ENCODE measurements at regions of chr11 and their contacts with region 1.

Region 1: GRCh38 chr11:10405855-10406592 is 49.0 kb upstream of the AMPD3 start:
- H3K4me3 ChIP-seq: no peak overlapping the region
- H3K27ac ChIP-seq: no peak overlapping the region
- H3K4me1 ChIP-seq: no peaks in the 10 kb centered on the region
- CTCF ChIP-seq: peak; percentile 45; the same call in 1 of the 2 replicates

Region 2: DNA sequence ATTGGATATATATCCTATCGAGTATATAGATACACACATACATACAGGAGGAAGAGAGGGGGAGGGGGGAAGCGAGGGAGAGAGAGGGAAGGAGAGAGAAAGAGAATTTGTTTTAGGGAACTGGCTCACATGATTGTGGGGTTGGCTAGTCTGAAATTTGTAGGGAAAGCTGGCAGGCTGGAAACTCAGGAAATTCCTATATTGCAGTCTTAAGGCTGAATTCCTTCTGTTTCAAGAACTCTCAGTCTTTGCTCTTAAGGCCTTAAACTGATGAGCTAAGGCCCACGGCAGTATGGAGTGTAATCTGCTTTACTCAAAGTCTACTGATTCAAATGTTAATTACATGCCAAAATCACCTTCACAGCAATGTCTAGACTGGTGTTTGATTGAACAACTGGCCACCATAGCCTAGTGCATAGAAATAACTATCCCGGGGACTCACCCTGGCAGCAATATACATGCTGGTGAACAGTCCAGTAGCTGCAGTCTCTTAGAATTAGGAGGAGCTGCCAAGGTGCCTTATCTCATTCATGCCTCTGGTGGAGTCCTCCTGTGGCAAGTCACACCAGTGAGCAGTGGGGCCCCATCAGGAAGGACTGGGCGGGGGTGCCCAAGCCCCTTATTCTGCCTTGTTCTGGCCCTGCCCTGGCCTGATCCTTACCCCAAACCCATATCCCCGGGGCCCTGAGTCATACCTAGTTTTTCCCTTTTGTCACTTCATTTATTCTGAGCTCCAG is 10.7 kb before region 1 on chr11:
- CTCF ChIA-PET with region 1: interaction called, 13 read pairs
- POLR2A ChIA-PET with region 1: no interaction called
- H3K4me3 ChIP-seq: no peak overlapping the region
- H3K27ac ChIP-seq: no peak overlapping the region
- H3K4me1 ChIP-seq: no peaks in the 10 kb centered on the region
- CTCF ChIP-seq: no peak

Region 3: DNA sequence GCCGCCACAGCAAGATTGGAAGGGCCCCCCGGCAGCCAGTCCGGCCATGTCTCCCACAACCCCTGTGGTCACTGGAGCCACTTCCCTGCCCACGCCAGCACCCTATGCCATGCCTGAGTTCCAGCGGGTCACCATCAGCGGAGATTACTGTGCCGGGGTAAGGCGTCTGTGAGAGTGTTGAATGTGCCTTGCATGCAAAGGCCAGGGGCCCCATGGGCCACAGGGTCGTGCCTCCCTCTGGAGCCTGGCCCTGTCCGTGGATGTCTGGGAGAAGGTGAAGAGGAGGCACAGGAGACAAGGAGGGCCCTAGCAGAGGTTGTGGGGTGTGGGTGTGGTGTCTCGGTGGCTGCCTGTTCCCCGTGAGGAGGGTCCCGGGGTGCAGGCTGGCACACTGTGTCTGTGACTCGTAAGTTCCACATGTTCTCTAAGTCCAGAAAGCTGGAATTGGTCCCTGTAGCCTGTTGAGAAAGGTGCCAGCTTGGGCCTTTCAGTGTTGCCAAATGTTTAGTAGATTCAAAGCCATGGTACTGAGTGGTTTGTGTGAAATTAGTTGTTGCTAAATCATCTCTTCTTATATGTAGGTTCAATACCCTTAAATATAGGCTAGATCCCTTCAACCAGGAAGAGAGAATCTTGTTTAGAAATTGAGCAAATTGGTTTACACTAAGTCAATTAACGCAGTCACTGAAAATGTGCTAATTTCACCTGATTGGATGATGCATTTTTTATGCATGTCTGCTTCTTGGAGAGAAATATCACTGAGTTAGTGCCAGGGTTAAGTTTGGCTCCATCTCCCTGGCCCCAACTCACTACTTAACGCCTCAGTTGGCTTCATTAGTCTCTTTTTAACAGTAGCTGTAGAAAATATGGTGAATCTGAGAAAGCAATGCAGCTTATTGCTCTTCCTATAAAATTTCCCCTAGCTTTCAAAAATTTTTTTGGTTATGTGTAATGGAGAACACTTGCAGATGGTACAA is 72.8 kb after region 1 on chr11:
- CTCF ChIA-PET with region 1: no interaction called
- POLR2A ChIA-PET with region 1: no interaction called
- H3K4me3 ChIP-seq: no peak overlapping the region
- H3K27ac ChIP-seq: no peak overlapping the region
- H3K4me1 ChIP-seq: no peaks in the 10 kb centered on the region
- CTCF ChIP-seq: no peak

Region 4: GRCh38 chr11:10540923-10541560 is 135.0 kb after region 1 on chr11 and contains the start of gene RNF141:
- CTCF ChIA-PET with region 1: interaction called, 10 read pairs
- POLR2A ChIA-PET with region 1: interaction called, 5 read pairs
- H3K4me3 ChIP-seq: peak within 1 kb of the TSS; percentile 85
- H3K27ac ChIP-seq: no peak within 1 kb of the TSS; the same call in 1 of the 2 replicates
- H3K4me1 ChIP-seq: no peaks in the 10 kb centered on the region
- CTCF ChIP-seq: peak; percentile 94

Region 5: DNA sequence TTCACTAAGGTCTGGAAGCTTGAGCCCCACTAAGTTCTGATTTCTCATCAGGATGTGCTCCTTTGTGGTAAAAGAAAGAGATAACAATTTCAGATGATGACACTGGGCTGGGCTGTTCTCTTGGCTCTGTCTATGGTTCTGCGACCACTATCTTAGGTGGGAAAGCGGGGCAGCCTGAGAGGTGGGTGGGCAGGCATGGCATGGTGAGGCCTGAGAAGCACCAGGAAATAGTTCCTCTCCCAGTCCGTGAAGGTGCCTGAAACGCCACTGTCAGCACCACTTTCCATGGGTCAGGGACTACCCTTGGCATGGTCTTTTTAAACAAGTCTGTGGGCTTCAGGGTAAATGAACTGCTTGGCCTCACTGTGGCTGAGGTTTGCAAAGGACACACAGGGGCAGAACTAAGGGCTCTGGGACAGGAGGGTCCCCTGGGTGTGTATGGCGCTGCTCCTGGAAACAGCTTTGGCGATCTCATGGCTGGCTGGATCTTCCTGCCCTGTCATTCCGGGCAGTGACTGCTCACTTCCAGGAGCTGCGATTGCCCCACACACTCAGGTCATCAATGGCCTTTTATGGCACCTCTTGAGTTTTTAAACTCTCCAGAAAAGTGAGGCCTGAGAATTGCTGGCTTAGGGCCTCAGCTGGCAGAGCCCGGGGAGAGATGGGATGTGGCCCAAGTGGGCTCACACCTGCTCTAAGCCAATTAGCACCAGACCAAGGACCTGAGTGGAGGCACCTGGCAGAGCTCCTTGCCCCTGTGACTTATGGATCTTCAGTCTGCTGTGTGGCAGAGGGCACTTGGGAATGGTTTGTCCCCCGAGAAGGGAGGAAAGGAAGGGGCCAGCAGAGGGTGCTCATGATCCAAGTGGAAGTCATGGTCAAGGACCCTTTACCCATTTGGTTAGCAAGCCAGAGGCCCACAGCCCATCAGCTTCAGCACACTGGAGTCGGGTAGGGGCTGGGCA is 218.1 kb after region 1 on chr11:
- CTCF ChIA-PET with region 1: interaction called, 10 read pairs
- POLR2A ChIA-PET with region 1: no interaction called
- H3K4me3 ChIP-seq: no peak overlapping the region
- H3K27ac ChIP-seq: no peak overlapping the region
- H3K4me1 ChIP-seq: no peaks in the 10 kb centered on the region
- CTCF ChIP-seq: 0 out of 2 replicates have a peak, but pooled peaks have one; percentile 26

Region 6: DNA sequence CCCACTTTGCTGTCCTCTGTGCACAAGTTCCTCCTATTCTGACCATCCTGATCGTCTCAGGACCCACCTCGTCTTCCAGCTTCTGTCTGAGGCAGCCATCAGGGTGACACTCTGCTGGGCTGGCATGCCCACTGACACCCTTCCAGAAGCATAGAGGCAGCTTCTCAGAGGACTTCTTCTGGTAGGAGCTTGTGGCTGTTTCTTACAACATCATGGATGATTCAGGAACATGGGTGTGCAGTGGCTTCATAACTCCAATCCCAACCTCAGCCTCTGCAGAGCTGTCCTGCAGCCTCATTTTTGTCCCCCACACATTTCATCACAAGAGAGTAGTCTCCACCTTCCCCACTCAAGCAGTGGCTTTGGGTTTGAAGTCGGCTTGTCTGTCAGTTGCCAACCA is 324.1 kb after region 1 on chr11:
- CTCF ChIA-PET with region 1: interaction called, 19 read pairs
- POLR2A ChIA-PET with region 1: no interaction called
- H3K4me3 ChIP-seq: no peak overlapping the region
- H3K27ac ChIP-seq: no peak overlapping the region
- H3K4me1 ChIP-seq: no peaks in the 10 kb centered on the region
- CTCF ChIP-seq: no peak

Region 7: GRCh38 chr11:10735481-10736475 is 329.8 kb after region 1 on chr11:
- CTCF ChIA-PET with region 1: interaction called, 19 read pairs
- POLR2A ChIA-PET with region 1: no interaction called
- H3K4me3 ChIP-seq: no peak overlapping the region
- H3K27ac ChIP-seq: no peak overlapping the region
- H3K4me1 ChIP-seq: no peaks in the 10 kb centered on the region
- CTCF ChIP-seq: peak; percentile 94